Activated B cell treated with CpG ODN at 0.5 μM for 24 hours (primary cell): ENCODE measurements at regions of chr12 and their contacts with region 1.

Region 1: GRCh38 chr12:51326762-51327439 is 2.9 kb upstream of the BIN2 start:
- DNase-seq: no peak
- ATAC-seq: peak; percentile 41
- H3K4me3 Mint-ChIP-seq: peak overlapping the region; percentile 62
- H3K27ac Mint-ChIP-seq: peak overlapping the region; percentile 72
- H3K4me1 Mint-ChIP-seq: peaks cover 81% of the 10 kb centered on the region
- H3K27me3 Mint-ChIP-seq: no peaks in the 10 kb centered on the region
- CTCF ChIP-seq: no peak

Region 2: GRCh38 chr12:50517456-50518048 is 809.3 kb before region 1 on chr12:
- CTCF ChIA-PET with region 1: no interaction called
- POLR2A ChIA-PET with region 1: no interaction called
- intact Hi-C with region 1: loop called (anchors 10 kb)
- DNase-seq: no peak
- ATAC-seq: peak; percentile 75
- H3K4me3 Mint-ChIP-seq: no peak overlapping the region
- H3K27ac Mint-ChIP-seq: no peak overlapping the region
- H3K4me1 Mint-ChIP-seq: peaks cover 44% of the 10 kb centered on the region
- H3K27me3 Mint-ChIP-seq: no peaks in the 10 kb centered on the region
- CTCF ChIP-seq: no peak

Region 3: DNA sequence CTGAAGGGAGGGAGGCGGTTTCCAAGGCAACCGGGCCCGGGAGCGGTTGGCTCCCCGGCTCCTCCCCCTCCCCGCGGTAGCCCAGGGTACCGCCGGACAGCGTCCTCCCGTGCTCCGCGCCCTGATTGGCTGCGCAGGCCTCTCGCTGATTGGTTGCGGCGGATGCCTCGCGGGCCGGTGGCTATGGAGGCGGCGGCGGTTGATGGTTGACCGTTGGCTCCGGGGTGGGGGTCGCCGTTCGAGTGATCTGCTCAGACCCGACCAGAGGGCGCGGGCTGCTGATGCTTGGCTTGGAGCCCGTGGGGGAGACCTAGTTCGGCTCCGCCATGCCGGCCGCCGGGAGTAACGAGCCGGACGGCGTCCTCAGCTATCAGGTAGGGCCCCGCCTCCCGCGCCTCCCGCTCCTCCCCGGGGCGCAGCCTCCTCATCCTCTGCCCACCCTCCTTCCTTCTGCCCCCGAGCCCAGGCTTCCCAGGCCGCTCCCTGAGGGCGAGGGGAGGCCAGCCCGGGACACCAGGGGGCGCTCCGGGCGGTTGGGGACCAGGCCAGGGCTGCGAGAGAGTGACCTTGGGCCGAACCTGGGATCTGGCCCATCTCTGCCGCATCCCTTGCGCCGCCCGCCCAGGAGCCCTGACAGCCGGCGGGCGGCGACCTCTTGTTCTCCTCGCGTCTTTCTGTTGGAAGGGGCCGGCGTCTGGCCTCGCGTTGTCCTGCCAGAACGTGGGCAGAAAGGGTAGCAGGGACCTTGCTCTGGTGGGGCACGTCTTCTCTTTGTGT is 97.9 kb after region 1 on chr12 and contains the start of gene SLC4A8:
- CTCF ChIA-PET with region 1: no interaction called
- POLR2A ChIA-PET with region 1: no interaction called
- intact Hi-C with region 1: no loop called
- DNase-seq: peak; percentile 75
- ATAC-seq: peak; percentile 92
- H3K4me3 Mint-ChIP-seq: peak within 1 kb of the TSS; percentile 83
- H3K27ac Mint-ChIP-seq: peak within 1 kb of the TSS; percentile 25
- H3K4me1 Mint-ChIP-seq: peaks cover 16% of the 10 kb centered on the region
- H3K27me3 Mint-ChIP-seq: no peaks in the 10 kb centered on the region
- CTCF ChIP-seq: no peak
- total RNA-seq, gene SLC4A8: 5.2 and 5.8 TPM in 2 replicates